ENCODE measurements at regions of chr21 and their contacts with region 1.

Region 1: GRCh38 chr21:35051287-35051818 is 2.3 kb upstream of the RUNX1 start:
- DNase-seq: peak; percentile 81 to 93
- ATAC-seq: peak; percentile 46 to 69 (median 59)
- H3K4me3 ChIP-seq: no peak overlapping the region
- H3K4me3 Mint-ChIP-seq: peak overlapping the region; percentile 92
- H3K27ac ChIP-seq: peak overlapping the region; percentile 57
- H3K27ac Mint-ChIP-seq: peak overlapping the region; percentile 95 to 97
- H3K4me1 ChIP-seq: peaks cover 39% of the 10 kb centered on the region
- H3K4me1 Mint-ChIP-seq: peaks cover 59 to 64% of the 10 kb centered on the region in 2 donors
- H3K27me3 ChIP-seq: no peaks in the 10 kb centered on the region
- H3K27me3 Mint-ChIP-seq: peaks cover 0 to 5% of the 10 kb centered on the region in 2 donors
- CTCF ChIP-seq: peak; percentile 71

Region 2: DNA sequence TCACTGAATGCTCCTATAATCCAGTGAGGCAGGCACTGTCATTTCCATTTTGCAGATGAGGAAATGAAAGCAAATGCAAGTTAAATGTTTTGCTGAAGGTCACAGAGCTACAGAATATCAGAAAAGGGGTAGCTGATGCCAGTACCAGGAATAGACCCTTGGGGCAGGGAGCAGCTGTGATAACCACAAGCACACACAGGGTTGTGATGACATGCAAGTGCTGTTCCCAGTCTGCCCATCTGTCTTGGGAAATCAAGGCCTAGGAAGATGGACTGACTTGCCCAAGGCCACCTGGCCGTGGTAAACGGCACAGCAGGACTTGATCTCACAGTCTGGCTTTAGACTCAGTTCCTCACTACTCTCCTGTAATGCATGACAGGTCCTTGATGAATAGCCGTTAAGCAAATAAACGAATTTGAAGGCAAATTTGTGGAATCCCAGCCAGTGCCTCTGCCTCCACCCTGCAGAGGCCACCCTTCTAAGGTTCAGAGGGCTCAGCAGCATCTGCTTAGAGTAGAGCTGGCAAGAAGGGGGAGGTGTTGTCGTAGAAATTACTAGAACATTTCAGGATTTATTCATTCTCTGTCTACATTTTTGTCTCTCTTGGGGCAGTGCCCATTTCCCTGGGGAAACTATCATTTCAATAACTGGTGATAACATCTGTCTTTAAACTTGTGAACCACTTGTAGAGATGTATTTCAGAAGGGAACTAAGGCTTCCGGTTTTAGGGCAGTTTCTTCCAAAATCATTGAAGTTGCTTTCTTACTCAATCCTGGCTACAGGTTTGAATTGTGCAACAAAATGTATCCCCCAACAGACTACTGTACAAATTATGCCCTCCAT is 1031.1 kb before region 1 on chr21:
- intact Hi-C with region 1: loop called (anchors 5 kb)
- DNase-seq: no peak
- ATAC-seq: no peak
- H3K4me3 ChIP-seq: no peak overlapping the region
- H3K4me3 Mint-ChIP-seq: peak overlapping the region; percentile 66
- H3K27ac ChIP-seq: peak overlapping the region; percentile 44
- H3K27ac Mint-ChIP-seq: no peak overlapping the region
- H3K4me1 ChIP-seq: peaks cover 57% of the 10 kb centered on the region
- H3K4me1 Mint-ChIP-seq: peaks cover 0 to 45% of the 10 kb centered on the region in 2 donors
- H3K27me3 ChIP-seq: no peaks in the 10 kb centered on the region
- H3K27me3 Mint-ChIP-seq: no peaks in the 10 kb centered on the region
- CTCF ChIP-seq: no peak

Region 3: DNA sequence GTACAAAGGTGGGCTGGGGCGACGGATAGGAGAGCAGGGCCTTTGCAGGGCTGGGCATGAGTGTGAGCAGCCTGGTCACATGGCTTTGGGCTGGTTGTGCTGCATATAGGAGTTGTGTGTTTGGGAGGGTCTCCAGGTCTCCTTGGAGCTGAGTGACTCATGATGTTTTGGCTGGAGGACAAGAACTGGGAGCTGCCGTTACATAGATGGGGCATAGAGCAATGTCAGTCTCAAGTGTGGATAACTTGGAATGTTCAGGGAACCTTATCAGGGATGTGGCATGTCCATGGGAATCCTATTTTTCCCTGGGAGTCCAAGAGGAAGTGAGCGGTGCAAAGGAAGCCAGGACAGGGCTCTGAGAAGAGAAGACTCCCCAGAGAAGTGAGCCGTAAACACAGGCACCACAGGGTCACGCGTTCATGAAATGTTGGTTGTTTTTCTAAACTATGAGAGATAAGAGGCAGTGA is 823.9 kb before region 1 on chr21:
- intact Hi-C with region 1: no loop called
- DNase-seq: no peak
- ATAC-seq: no peak
- H3K4me3 ChIP-seq: no peak overlapping the region
- H3K4me3 Mint-ChIP-seq: no peak overlapping the region
- H3K27ac ChIP-seq: no peak overlapping the region
- H3K27ac Mint-ChIP-seq: no peak overlapping the region
- H3K4me1 ChIP-seq: no peaks in the 10 kb centered on the region
- H3K4me1 Mint-ChIP-seq: no peaks in the 10 kb centered on the region
- H3K27me3 ChIP-seq: no peaks in the 10 kb centered on the region
- H3K27me3 Mint-ChIP-seq: peaks cover 0 to 5% of the 10 kb centered on the region in 2 donors
- CTCF ChIP-seq: no peak

Region 4: DNA sequence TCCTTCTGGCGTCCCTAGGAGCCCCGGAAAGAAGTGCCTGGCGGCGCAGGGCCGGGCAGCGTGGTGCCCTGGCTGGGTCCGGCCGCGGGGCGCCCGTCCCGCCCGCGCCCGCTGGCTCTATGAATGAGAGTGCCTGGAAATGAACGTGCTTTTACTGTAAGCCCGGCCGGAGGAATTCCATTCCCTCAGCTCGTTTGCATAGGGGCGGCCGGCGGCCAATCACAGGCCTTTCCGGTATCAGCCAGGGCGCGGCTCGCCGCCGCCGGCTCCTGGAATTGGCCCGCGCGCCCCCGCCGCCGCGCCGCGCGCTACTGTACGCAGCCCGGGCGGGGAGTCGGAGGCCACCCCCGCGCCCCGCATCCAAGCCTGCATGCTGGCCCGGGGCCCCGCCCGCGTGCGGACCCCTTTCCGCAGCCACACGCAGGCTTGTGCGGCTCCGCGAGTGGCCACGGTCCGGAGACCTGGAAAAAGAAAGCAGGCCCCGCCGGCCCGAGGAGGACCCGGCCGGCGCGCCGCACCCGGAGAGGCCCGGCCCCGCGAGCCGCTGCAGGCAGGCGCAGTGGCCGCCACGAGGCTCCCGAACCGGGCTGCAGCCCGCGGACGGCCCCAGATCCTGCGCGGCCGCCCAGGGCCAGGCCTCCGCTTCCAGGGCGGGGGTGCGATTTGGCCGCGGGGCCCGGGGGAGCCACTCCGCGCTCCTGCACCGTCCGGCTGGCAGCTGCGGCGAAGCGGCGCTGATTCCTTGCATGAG is 162.6 kb before region 1 on chr21:
- intact Hi-C with region 1: loop called (anchors 1 kb)
- DNase-seq: peak; percentile 66 to 84
- ATAC-seq: peak; percentile 46 to 69 (median 50)
- H3K4me3 ChIP-seq: peak overlapping the region; percentile 77
- H3K4me3 Mint-ChIP-seq: peak overlapping the region; percentile 96
- H3K27ac ChIP-seq: peak overlapping the region; percentile 78
- H3K27ac Mint-ChIP-seq: peak overlapping the region; percentile 98
- H3K4me1 ChIP-seq: peaks cover 45% of the 10 kb centered on the region
- H3K4me1 Mint-ChIP-seq: peaks cover 23 to 35% of the 10 kb centered on the region in 2 donors
- H3K27me3 ChIP-seq: no peaks in the 10 kb centered on the region
- H3K27me3 Mint-ChIP-seq: no peaks in the 10 kb centered on the region
- CTCF ChIP-seq: no peak

Region 5: DNA sequence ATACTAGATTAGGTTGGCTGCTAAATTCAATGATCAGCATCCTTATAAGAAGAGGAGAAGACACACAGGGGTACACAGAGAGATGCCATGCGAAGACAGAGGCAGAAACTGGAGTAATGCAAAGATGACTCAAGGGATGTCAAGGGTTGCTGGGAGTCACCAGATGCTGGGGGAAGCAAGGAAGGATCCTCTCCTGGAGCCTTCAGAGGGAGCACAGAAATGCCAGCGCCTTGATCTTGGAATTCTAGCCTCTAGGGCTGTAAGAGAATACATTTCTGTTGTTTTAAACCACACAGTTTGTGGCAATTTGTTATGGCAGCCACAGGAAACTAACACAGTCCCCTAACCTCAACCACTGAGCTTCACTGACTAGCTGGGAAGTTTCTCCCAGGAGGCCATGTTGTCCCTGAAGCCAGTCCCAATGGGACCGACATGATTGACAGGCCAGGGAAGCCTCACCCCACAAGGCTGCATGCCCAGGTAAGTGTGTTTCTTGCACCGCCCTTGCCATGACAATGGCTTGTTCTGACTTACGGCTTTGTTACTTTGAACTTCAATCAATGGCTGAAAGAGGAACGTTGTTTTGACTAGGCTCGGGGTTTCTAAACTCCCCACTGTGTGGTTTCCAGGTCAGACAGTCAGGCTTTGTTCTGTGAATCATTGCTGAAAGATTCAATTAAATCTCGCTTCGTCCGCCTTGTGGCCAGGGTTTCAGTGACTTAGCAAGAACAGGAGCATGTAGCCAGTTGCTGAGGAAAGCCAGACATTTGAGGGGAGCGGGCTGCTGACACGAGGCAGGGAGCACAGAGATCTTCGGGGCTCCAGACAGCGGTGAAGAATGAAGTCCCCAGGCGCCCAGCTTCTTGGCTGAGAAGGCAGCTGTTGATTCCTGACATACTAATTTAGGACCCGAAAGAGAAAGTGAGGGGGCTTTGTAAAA is 64.5 kb before region 1 on chr21:
- intact Hi-C with region 1: loop called (anchors 1 kb)
- DNase-seq: peak; percentile 33 to 78
- ATAC-seq: peak; percentile 32 to 64 (median 48)
- H3K4me3 ChIP-seq: no peak overlapping the region
- H3K4me3 Mint-ChIP-seq: peak overlapping the region; percentile 88
- H3K27ac ChIP-seq: peak overlapping the region; percentile 57
- H3K27ac Mint-ChIP-seq: peak overlapping the region; percentile 82 to 91
- H3K4me1 ChIP-seq: peaks cover 79% of the 10 kb centered on the region
- H3K4me1 Mint-ChIP-seq: peaks cover 90 to 95% of the 10 kb centered on the region in 2 donors
- H3K27me3 ChIP-seq: no peaks in the 10 kb centered on the region
- H3K27me3 Mint-ChIP-seq: no peaks in the 10 kb centered on the region
- CTCF ChIP-seq: no peak

Region 6: GRCh38 chr21:35138665-35139381 is 87.5 kb after region 1 on chr21:
- intact Hi-C with region 1: loop called (anchors 5 kb)
- DNase-seq: peak; percentile 19 to 53
- ATAC-seq: peak; percentile 58 to 92 (median 88)
- H3K4me3 ChIP-seq: no peak overlapping the region
- H3K4me3 Mint-ChIP-seq: peak overlapping the region; percentile 31
- H3K27ac ChIP-seq: no peak overlapping the region
- H3K27ac Mint-ChIP-seq: peak overlapping the region in 1 of 2 donors; percentile 38
- H3K4me1 ChIP-seq: peaks cover 10% of the 10 kb centered on the region
- H3K4me1 Mint-ChIP-seq: peaks cover 16 to 17% of the 10 kb centered on the region in 2 donors
- H3K27me3 ChIP-seq: no peaks in the 10 kb centered on the region
- H3K27me3 Mint-ChIP-seq: no peaks in the 10 kb centered on the region
- CTCF ChIP-seq: no peak

Region 7: DNA sequence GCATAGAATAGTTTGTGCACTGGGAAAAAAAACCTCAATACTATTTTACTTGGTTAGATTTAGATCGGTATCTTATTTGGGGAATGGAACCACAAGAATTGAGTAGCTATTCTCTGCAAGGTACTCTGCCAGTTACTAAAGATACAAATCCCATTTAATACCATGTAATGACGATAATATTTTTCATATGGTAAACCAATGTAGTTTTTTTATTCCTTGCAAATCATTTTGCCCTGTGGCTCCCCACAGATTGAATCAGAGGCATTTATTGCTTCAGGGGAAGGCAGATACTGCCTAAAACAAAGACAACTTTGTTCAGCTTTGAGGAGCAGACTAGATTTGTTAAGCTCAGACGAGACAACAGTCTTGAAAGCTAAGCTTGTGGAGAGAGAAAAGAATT is 224.4 kb after region 1 on chr21:
- intact Hi-C with region 1: loop called (anchors 5 kb)
- DNase-seq: no peak
- ATAC-seq: no peak
- H3K4me3 ChIP-seq: no peak overlapping the region
- H3K4me3 Mint-ChIP-seq: no peak overlapping the region
- H3K27ac ChIP-seq: no peak overlapping the region
- H3K27ac Mint-ChIP-seq: no peak overlapping the region
- H3K4me1 ChIP-seq: no peaks in the 10 kb centered on the region
- H3K4me1 Mint-ChIP-seq: peaks cover 6 to 20% of the 10 kb centered on the region in 2 donors
- H3K27me3 ChIP-seq: no peaks in the 10 kb centered on the region
- H3K27me3 Mint-ChIP-seq: peaks cover 0 to 2% of the 10 kb centered on the region in 2 donors
- CTCF ChIP-seq: no peak

Region 8: DNA sequence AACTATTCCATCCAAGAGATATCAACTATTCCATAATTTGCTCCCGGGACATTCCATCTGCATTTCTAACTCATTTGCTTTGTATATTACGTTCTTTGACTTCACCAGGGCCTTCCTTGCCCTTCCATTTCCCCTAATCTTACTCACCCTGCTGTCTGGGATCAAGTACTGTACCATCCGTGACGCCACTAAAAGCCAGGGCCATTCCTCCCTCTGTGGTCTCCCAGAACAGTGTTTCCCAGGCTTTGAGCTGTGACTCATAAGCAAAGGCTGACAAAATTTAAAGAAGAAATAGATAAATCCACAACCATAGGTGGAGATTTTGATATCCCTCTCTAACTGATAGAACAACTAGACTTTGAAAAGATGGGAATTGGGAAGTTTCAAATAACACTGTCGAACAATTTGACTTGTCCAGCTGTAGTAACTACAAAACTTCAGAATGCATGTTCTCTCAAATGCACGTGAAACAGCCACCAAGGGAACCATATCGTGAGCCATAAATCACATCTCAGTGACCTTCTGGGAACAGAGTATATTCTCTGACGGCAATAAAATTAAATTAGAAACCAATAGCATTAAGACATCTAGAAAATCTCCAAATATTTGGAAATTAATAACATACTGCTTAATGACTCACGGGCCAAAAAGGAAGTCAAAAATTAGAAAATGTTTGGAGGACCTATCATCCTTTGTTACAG is 507.9 kb after region 1 on chr21:
- intact Hi-C with region 1: no loop called
- DNase-seq: no peak
- ATAC-seq: no peak
- H3K4me3 ChIP-seq: no peak overlapping the region
- H3K4me3 Mint-ChIP-seq: no peak overlapping the region
- H3K27ac ChIP-seq: no peak overlapping the region
- H3K27ac Mint-ChIP-seq: no peak overlapping the region
- H3K4me1 ChIP-seq: no peaks in the 10 kb centered on the region
- H3K4me1 Mint-ChIP-seq: no peaks in the 10 kb centered on the region
- H3K27me3 ChIP-seq: no peaks in the 10 kb centered on the region
- H3K27me3 Mint-ChIP-seq: peaks cover 15 to 31% of the 10 kb centered on the region in 2 donors
- CTCF ChIP-seq: no peak

Region 9: GRCh38 chr21:36319765-36320420 is 1268.5 kb after region 1 on chr21 and contains the start of gene MORC3:
- intact Hi-C with region 1: loop called (anchors 5 kb)
- DNase-seq: peak; percentile 96 to 99
- ATAC-seq: peak; percentile 88 to 97 (median 89)
- H3K4me3 ChIP-seq: peak within 1 kb of the TSS; percentile 94
- H3K4me3 Mint-ChIP-seq: peak within 1 kb of the TSS; percentile 96
- H3K27ac ChIP-seq: peak within 1 kb of the TSS; percentile 89
- H3K27ac Mint-ChIP-seq: peak within 1 kb of the TSS; percentile 87 to 98
- H3K4me1 ChIP-seq: peaks cover 21% of the 10 kb centered on the region
- H3K4me1 Mint-ChIP-seq: peaks cover 35 to 43% of the 10 kb centered on the region in 2 donors
- H3K27me3 ChIP-seq: no peaks in the 10 kb centered on the region
- H3K27me3 Mint-ChIP-seq: no peaks in the 10 kb centered on the region
- CTCF ChIP-seq: no peak
- total RNA-seq, gene MORC3: 59.7 to 74.1 (median 64.8) TPM

Measured in natural killer cell (primary cell).